AG04450 (cell line): ENCODE measurements at regions of chr7 and their contacts with region 1.

Region 1: GRCh38 chr7:111752022-111752582 is 189.8 kb upstream of the IMMP2L start:
- DNase-seq: no peak
- H3K4me3 ChIP-seq: no peak overlapping the region
- H3K27ac ChIP-seq: no peak overlapping the region
- H3K27me3 ChIP-seq: no peaks in the 10 kb centered on the region
- CTCF ChIP-seq: peak; percentile 92

Region 2: DNA sequence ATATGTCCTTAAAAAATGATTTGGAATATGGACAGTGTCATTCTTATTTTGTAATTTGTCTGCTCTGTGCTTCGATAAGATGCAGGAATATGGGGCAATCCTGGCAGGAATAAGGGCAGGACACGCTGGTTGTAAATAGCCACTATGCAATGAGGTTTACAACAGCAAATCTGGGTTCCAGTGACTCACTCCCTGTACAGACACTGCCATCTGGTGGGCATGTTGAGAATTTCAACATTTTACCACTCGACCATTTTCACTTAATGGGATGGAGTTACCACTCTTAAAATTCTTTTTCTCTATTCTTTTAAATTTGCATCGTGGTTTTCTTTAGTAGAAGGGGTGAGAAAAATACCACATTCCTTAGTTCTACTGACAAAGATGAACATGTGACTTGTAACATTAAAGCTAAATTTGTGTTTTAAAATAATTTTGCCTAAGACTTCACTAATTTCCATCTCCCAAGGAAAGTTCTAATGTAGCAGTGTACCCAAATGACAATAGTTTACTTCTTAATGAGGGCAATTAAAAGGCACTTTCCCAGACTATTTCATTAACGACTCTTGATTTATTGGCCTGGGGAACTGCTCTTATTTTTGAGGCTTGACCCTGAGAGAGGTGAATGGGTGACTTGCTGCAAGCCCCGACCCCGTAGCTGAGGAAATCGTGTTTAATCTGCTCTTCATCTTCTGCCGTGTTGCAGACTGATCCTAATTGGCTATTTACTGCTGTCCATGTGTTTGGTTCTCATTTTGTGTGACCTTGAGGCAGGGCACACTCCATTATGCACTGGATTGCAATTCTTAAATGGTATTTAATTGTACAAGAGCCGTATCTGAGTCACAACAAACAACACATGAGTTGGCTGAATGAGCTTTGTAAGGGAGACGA is 16.2 kb before region 1 on chr7:
- CTCF ChIA-PET with region 1: interaction called, 44 read pairs
- POLR2A ChIA-PET with region 1: no interaction called
- DNase-seq: peak; percentile 43
- H3K4me3 ChIP-seq: no peak overlapping the region
- H3K27ac ChIP-seq: no peak overlapping the region
- H3K27me3 ChIP-seq: no peaks in the 10 kb centered on the region
- CTCF ChIP-seq: peak; percentile 80

Region 3: GRCh38 chr7:111763221-111763801 is 11.2 kb after region 1 on chr7:
- CTCF ChIA-PET with region 1: interaction called, 29 read pairs
- POLR2A ChIA-PET with region 1: no interaction called
- DNase-seq: peak; percentile 32
- H3K4me3 ChIP-seq: no peak overlapping the region
- H3K27ac ChIP-seq: no peak overlapping the region
- H3K27me3 ChIP-seq: no peaks in the 10 kb centered on the region
- CTCF ChIP-seq: peak; percentile 77

Region 4: DNA sequence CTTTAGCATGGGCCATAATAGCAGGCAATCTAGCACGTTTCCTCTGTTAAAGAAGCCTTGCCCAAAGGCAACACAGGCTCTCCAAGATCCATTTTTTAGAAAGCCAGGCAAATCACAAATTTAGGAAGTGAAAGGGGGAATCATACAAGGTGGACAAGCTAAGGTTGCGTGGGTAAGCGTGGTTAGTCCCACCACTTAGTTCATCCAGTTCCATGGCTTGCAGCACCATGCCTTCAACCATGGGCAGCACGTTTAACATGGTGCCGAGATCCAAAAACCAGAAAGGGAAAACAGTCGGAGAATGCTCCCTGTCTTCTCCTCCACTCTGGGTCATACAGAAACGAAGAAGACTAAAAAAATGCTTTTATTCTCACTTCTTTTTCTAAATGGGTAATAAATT is 44.6 kb after region 1 on chr7:
- CTCF ChIA-PET with region 1: no interaction called
- POLR2A ChIA-PET with region 1: no interaction called
- DNase-seq: no peak
- H3K4me3 ChIP-seq: no peak overlapping the region
- H3K27ac ChIP-seq: no peak overlapping the region
- H3K27me3 ChIP-seq: no peaks in the 10 kb centered on the region
- CTCF ChIP-seq: no peak

Region 5: DNA sequence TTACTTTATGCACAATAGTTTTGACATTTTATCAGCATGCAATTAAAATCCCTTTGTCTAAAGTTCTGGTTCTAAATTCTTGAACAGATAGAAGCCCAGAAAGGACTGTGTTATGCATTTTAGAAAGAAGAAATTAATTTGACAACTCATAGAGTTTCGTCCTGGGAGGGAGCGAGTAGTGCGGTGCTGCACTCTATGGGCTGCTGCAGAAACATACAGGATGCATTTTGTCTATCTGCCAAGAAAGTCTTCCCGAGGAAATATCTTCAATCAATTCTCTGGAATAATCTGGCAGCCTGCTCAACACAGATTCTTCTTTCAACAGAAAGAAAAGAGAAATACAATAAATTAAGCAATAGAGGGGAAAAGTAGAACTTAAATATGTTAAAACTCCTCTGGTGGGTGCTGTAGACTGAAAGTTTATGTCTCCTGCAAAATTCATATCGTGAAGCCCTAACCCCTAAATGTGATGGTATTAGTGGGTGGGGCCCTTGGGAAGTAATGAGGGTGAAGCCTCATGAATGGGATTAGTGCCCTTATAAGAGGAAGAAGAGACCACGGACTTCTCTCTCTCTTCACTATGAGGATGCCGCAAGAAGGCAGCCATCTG is 659.2 kb after region 1 on chr7:
- CTCF ChIA-PET with region 1: interaction called, 11 read pairs
- POLR2A ChIA-PET with region 1: no interaction called
- DNase-seq: no peak
- H3K4me3 ChIP-seq: no peak overlapping the region
- H3K27ac ChIP-seq: no peak overlapping the region
- H3K27me3 ChIP-seq: peaks cover 7% of the 10 kb centered on the region
- CTCF ChIP-seq: peak; percentile 78

Region 6: GRCh38 chr7:112495810-112496462 is 743.8 kb after region 1 on chr7:
- CTCF ChIA-PET with region 1: interaction called, 16 read pairs
- POLR2A ChIA-PET with region 1: no interaction called
- DNase-seq: no peak
- H3K4me3 ChIP-seq: no peak overlapping the region
- H3K27ac ChIP-seq: no peak overlapping the region
- H3K27me3 ChIP-seq: no peaks in the 10 kb centered on the region
- CTCF ChIP-seq: peak; percentile 65